Heart left ventricle (tissue), 16 donors: ENCODE measurements at regions of chr16 and their contacts with region 1.

Region 1: GRCh38 chr16:3819746-3820724 is 60.5 kb downstream of the CREBBP start:
- DNase-seq: peak in 2 of 5 donors; percentile 44 to 66
- ATAC-seq: peak; percentile 80 to 86 (median 84)
- H3K4me3 ChIP-seq: peak overlapping the region in 1 of 12 donors; percentile 8
- H3K27ac ChIP-seq: peak overlapping the region in 4 of 12 donors; percentile 10 to 61 (median 44)
- H3K4me1 ChIP-seq: peaks cover 18 to 97% (median 88%) of the 10 kb centered on the region in 12 donors
- H3K27me3 ChIP-seq: no peaks in the 10 kb centered on the region
- CTCF ChIP-seq: no peak
- POLR2A ChIP-seq: no peak

Region 2: GRCh38 chr16:3734758-3735221 is 85.2 kb before region 1 on chr16:
- intact Hi-C with region 1: no loop called
- DNase-seq: no peak
- ATAC-seq: peak in 1 of 4 donors; percentile 37
- H3K4me3 ChIP-seq: no peak overlapping the region
- H3K27ac ChIP-seq: no peak overlapping the region
- H3K4me1 ChIP-seq: no peaks in the 10 kb centered on the region
- H3K27me3 ChIP-seq: no peaks in the 10 kb centered on the region
- CTCF ChIP-seq: no peak
- POLR2A ChIP-seq: no peak

Region 3: DNA sequence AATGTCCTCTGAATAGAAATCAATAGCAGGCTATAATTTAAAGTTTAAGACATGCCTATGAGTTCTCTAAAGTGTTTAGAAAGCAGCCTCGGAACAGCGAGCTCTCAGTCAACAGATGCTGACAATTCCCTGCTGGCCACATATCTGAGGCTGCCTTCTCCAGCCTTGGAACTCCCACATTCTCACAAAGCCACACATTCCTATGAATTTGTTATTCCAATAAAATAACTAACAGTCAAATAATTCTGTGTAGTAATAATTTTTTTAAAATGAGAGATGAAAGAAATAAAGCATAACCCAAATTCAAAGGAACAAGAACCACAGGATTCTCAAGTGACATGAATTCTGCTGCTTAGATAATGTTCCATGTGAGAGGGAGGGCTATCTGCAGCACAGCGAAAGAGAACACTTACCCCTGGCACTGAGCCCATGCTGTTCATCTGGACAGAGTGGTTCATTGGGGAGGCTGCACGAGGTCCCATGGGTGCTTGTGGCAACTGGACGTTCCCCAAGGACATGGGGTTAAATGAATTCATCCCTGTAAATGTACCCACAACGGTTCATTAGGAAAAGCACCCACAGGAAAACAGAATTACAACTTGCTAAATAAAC is 45.8 kb before region 1 on chr16:
- intact Hi-C with region 1: no loop called
- DNase-seq: peak; percentile 67 to 88 (median 72)
- ATAC-seq: peak; percentile 85 to 88 (median 87)
- H3K4me3 ChIP-seq: no peak overlapping the region
- H3K27ac ChIP-seq: peak overlapping the region in 11 of 12 donors; percentile 0 to 67 (median 37)
- H3K4me1 ChIP-seq: peaks cover 5 to 45% (median 26%) of the 10 kb centered on the region in 12 donors
- H3K27me3 ChIP-seq: no peaks in the 10 kb centered on the region
- CTCF ChIP-seq: no peak
- POLR2A ChIP-seq: no peak

Region 4: DNA sequence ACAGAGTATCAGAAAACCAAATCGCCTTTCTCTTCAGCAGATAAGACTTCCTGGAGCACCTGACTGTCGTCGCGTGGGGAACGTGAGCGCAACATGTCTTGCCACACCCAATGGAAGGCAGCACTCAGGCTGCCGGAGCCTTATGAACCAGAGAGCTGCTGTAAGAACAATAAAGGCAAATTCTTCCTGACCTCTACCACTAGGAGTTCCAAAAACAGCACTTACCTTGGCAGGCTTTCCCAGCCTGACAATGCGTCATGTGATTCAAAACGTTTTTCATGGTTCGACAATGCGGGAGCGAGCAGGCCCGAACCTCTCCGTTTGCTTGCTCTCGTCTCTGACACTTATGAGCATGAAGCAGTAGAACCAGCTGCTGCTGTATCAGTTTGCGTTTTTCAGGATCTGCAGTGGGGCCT is 26.9 kb before region 1 on chr16:
- intact Hi-C with region 1: loop called in 1 of 10 experiments (anchors 2 kb)
- DNase-seq: peak in 4 of 5 donors; percentile 57 to 67 (median 60)
- ATAC-seq: peak; percentile 60 to 90 (median 88)
- H3K4me3 ChIP-seq: peak overlapping the region in 3 of 12 donors; percentile 3 to 38 (median 8)
- H3K27ac ChIP-seq: peak overlapping the region; percentile 19 to 72 (median 52)
- H3K4me1 ChIP-seq: peaks cover 0 to 60% (median 44%) of the 10 kb centered on the region in 12 donors
- H3K27me3 ChIP-seq: no peaks in the 10 kb centered on the region
- CTCF ChIP-seq: peak in 9 of 12 donors; percentile 6 to 51 (median 28)
- POLR2A ChIP-seq: peak in 1 of 2 donors; percentile 21

Region 5: DNA sequence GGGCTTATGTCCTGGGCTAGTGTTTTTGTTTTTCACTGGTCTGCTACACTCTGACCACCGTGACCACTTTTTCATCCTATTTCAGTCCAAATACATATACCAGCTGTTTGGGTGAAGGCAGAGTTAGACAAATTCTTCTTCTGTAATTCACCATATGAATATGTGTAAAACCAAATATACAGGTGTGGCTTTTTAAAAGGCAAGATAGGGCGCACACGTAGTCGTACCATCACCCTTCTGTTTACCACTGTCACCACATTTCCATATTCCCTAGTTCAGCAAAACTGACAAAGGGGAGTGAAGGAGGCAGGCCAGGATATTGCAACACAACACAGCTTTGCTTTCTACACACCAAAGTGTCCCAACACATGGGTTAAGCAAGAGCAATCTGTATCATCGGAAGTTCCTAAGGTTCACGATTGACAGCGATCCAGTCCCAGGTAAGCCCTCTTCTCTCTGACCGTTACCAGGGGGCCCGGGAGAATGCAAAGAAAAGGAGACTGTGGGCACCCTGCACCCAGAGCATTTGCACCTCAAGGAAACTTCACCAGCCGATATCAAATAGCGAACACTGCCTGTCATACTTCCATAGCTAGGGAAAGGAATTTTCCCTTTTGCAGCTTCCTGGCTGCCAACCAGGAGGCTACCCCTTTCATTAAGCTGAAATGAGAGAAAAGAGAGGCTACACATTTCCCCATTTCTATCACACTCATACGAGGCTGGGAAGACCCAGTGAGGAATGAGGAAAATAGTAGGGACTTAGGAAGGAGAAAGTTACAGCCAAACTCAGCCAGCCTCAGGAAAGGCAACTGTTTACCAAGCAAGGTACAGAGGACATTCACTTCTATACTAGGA is 37.4 kb after region 1 on chr16:
- intact Hi-C with region 1: loop called in 1 of 10 experiments (anchors 5 kb)
- DNase-seq: no peak
- ATAC-seq: peak; percentile 37 to 85 (median 68)
- H3K4me3 ChIP-seq: no peak overlapping the region
- H3K27ac ChIP-seq: peak overlapping the region in 5 of 12 donors; percentile 4 to 81 (median 11)
- H3K4me1 ChIP-seq: peaks cover 7 to 98% (median 72%) of the 10 kb centered on the region in 12 donors
- H3K27me3 ChIP-seq: no peaks in the 10 kb centered on the region
- CTCF ChIP-seq: no peak
- POLR2A ChIP-seq: no peak